ENCODE measurements at regions of chr14 and their contacts with region 1.

Region 1: GRCh38 chr14:24251880-24252288 is 9.5 kb upstream of the TINF2 start:
- DNase-seq: no peak
- ATAC-seq: no peak
- H3K4me3 Mint-ChIP-seq: no peak overlapping the region
- H3K27ac Mint-ChIP-seq: no peak overlapping the region
- H3K4me1 Mint-ChIP-seq: peaks cover 22% of the 10 kb centered on the region
- H3K27me3 Mint-ChIP-seq: no peaks in the 10 kb centered on the region
- CTCF ChIP-seq: no peak

Region 2: DNA sequence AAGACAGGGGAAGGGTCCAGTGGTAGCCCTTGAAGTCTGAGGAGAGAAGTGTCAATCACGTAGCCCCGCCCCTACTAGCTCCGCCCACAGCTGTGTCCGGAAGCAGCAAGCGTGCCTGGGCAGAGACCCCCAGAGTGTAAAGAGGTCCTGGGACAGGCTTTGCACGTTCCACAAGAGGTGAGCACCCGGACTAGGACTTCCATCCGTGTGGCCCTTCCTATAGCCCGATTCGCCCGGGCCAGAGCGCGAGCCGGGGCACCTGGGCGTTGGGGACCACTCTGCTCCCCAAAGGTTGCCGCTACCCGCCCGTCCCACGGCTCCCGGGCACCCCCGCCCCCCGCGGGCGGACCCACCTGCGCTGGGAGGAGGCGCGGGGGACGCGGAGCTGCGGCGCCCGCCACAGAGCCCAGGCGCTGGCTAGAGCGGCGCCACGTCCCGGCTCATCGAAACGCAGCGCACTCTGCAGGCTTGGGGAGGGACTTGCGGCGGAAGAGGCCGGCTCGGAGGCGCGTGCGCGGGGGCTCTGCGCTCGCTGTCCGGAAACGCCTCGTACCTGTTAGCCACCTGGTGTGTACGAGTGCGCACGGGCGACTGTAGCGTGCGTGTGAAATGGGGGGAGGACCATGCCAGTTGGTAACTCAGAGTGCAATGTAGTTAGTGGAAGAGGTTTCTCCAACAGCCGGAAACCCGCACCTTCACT is 19.4 kb after region 1 on chr14 and contains the start of gene RABGGTA:
- CTCF ChIA-PET with region 1: interaction called, 47 read pairs
- POLR2A ChIA-PET with region 1: interaction called, 21 read pairs
- intact Hi-C with region 1: loop called (anchors 2 kb)
- DNase-seq: peak; percentile 92
- ATAC-seq: peak; percentile 85
- H3K4me3 Mint-ChIP-seq: peak within 1 kb of the TSS; percentile 82
- H3K27ac Mint-ChIP-seq: peak within 1 kb of the TSS; percentile 94
- H3K4me1 Mint-ChIP-seq: peaks cover 39% of the 10 kb centered on the region
- H3K27me3 Mint-ChIP-seq: no peaks in the 10 kb centered on the region
- CTCF ChIP-seq: peak; percentile 77
- total RNA-seq, gene RABGGTA: 37.6 to 42.7 TPM

Region 3: DNA sequence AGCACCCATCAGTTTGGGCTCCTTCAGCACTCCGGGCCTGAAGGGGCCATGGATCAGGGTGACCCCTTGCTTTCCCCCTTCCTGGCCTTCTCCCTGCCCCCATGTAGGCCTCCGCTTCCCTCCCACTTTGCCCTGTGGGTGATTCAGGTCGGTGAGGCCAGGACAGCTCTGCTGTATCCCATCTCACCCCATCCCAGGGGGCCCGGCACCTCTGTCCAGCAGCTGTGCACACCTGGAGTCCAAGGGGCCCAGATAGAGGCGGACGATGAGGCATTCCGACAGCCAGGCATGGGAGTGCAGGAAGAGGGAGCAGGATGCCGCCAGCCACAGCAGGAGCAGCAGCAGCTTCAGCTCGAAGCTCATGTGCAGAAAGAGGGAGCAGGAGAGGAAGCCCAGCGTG is 70.8 kb after region 1 on chr14:
- CTCF ChIA-PET with region 1: no interaction called
- POLR2A ChIA-PET with region 1: no interaction called
- intact Hi-C with region 1: no loop called
- DNase-seq: no peak
- ATAC-seq: no peak
- H3K4me3 Mint-ChIP-seq: no peak overlapping the region
- H3K27ac Mint-ChIP-seq: no peak overlapping the region
- H3K4me1 Mint-ChIP-seq: peaks cover 7% of the 10 kb centered on the region
- H3K27me3 Mint-ChIP-seq: no peaks in the 10 kb centered on the region
- CTCF ChIP-seq: no peak

Measured in activated CD8-positive, alpha-beta T cell treated with anti-CD3 and anti-CD28 coated beads for 36 hours (primary cell).